Activated CD4-positive, alpha-beta T cell treated with anti-CD3 and anti-CD28 coated beads, Interleukin-2, amount 10 ng/mL, durations not matched to agents 24 days and 14 days (primary cell): ENCODE measurements at regions of chr10 and their contacts with region 1.

Region 1: DNA sequence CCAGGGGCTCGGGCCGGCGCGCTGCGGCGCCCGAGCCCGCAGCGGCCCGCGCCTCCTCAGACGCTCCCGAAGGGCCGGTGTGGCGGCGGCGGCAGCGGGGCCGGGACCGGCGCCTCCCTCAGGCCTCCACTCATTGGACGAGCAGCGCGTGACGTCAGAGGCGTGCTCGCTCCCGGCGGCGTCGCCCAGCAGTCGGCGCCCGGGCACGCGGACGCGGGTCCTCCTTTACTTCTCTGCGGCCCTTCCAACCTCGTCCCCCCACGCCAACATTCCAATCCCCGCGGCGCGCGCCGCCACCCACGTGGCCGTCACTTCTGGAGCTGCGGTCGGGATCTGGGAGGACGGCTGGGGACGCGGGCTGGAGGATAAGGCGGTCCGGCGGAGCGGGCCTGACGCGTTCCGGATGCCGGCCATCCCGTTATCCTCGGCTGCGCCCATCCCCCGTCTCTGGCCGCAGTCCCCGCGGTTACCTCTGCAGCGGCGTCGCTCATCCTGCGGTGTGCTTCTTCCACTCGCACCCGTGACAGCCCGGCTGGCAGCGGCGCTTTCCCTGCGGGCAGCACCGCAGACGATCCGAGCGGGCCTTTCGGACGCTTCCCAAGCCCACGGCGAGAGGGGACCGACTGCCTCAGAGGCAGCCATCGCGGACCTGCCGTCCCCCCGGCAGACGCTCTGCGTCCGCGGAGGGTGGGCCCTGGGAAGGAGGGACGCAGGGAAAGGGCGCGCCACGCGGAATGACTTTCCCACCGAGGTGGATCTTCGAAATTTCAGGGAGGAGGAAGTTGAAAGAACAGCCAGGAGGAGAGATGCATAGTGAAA is at the start of gene PDZD8:
- DNase-seq: peak; percentile 98
- H3K4me3 Mint-ChIP-seq: peak within 1 kb of the TSS; percentile 94
- H3K27ac Mint-ChIP-seq: peak within 1 kb of the TSS; percentile 87
- H3K4me1 Mint-ChIP-seq: peaks cover 15% of the 10 kb centered on the region
- H3K27me3 Mint-ChIP-seq: peaks cover 36% of the 10 kb centered on the region
- total RNA-seq, gene PDZD8: 23.3 and 23.5 TPM in 2 replicates

Region 2: DNA sequence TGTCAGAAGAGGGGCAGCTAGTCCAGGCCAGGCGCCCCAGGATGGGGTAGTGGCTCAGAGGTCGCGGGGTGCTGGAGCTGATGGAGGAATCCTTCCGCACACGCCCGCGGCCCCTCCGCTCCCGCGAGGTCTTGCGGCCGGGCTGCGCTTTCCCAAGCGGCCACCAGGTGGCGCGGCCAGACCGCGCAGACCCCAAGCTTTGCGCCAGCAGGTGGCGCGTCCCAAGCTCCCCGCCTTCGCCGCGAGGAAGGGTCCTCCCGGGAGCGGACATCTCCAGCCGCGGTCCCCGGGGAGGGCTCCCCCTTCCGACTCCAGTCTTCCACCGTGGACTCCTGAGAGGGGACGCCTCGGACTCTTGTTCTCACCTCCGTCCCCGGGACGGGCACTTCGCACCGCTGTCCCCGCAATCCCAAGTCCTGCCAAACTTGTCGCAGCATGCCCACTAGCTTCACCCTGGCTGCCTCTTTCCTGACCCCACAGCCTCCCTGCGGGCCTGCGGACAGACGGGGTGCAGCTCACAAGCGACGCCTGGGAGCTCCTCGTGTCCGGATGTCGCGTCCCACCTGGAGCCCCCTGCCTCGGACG is 158.9 kb before region 1 on chr10:
- intact Hi-C with region 1: loop called (anchors 5 kb)
- DNase-seq: peak; percentile 93
- H3K4me3 Mint-ChIP-seq: peak overlapping the region; percentile 83
- H3K27ac Mint-ChIP-seq: no peak overlapping the region
- H3K4me1 Mint-ChIP-seq: peaks cover 7% of the 10 kb centered on the region
- H3K27me3 Mint-ChIP-seq: peaks cover 24% of the 10 kb centered on the region

Region 3: DNA sequence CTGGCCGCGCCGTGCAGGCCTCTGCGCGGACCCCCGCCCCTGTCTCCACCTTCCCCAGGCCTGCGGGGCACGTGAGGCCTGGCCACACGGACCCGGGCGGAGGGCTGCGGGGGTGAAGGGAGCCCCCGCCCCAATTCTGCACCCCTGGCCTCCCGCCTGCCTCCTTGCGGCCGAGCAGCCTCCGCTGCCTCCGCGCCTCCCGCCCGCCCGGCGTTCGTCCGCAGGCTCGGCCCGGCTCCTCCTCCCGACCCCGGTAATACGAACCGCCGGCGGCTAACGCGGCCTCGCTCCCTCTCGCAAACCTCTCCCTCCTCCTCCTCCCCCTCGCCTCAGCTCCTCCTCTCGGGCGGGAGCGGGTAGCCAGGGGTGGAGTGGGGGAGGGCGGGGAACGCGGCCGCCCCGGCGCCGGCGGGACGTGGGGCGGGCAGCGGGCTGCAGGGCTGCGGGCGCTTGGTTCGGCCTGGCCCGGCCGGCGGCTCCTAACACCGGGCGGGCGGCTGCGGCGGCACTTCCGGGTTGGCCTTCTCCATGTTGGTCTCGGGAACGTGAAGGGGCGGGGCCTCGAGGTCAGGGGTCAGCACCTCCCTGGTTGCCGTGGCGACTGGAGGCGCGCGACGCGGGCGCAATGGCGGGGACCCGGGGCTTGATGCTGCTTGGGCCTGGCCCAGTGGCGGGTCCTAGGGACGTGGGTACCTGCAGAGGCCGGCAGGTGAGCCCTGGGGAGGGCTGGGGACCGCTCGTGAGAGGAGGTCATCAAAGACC is 671.0 kb after region 1 on chr10 and contains the start of gene RAB11FIP2:
- intact Hi-C with region 1: loop called (anchors 2 kb)
- DNase-seq: peak; percentile 99
- H3K4me3 Mint-ChIP-seq: peak within 1 kb of the TSS; percentile 91
- H3K27ac Mint-ChIP-seq: peak within 1 kb of the TSS; percentile 85
- H3K4me1 Mint-ChIP-seq: peaks cover 21% of the 10 kb centered on the region
- H3K27me3 Mint-ChIP-seq: peaks cover 15% of the 10 kb centered on the region
- total RNA-seq, gene RAB11FIP2: 12.3 and 14.5 TPM in 2 replicates

Region 4: GRCh38 chr10:118341791-118342637 is 966.4 kb after region 1 on chr10 and contains the start of gene FAM204A:
- intact Hi-C with region 1: loop called (anchors 10 kb)
- DNase-seq: peak; percentile 99
- H3K4me3 Mint-ChIP-seq: peak within 1 kb of the TSS; percentile 89
- H3K27ac Mint-ChIP-seq: peak within 1 kb of the TSS; percentile 92
- H3K4me1 Mint-ChIP-seq: peaks cover 28% of the 10 kb centered on the region
- H3K27me3 Mint-ChIP-seq: peaks cover 9% of the 10 kb centered on the region
- total RNA-seq, gene FAM204A: 57.2 and 60.0 TPM in 2 replicates